Endothelial cell of umbilical vein (primary cell): ENCODE measurements at regions of chr22 and their contacts with region 1.

Region 1: GRCh38 chr22:22877523-22878210 is 9.9 kb upstream of the IGLL5 start:
- DNase-seq: peak; percentile 40
- H3K4me3 ChIP-seq: no peak overlapping the region
- H3K27ac ChIP-seq: no peak overlapping the region
- H3K4me1 ChIP-seq: no peaks in the 10 kb centered on the region
- H3K27me3 ChIP-seq: no peaks in the 10 kb centered on the region
- CTCF ChIP-seq: peak; percentile 65 to 85
- POLR2A ChIP-seq: no peak

Region 2: DNA sequence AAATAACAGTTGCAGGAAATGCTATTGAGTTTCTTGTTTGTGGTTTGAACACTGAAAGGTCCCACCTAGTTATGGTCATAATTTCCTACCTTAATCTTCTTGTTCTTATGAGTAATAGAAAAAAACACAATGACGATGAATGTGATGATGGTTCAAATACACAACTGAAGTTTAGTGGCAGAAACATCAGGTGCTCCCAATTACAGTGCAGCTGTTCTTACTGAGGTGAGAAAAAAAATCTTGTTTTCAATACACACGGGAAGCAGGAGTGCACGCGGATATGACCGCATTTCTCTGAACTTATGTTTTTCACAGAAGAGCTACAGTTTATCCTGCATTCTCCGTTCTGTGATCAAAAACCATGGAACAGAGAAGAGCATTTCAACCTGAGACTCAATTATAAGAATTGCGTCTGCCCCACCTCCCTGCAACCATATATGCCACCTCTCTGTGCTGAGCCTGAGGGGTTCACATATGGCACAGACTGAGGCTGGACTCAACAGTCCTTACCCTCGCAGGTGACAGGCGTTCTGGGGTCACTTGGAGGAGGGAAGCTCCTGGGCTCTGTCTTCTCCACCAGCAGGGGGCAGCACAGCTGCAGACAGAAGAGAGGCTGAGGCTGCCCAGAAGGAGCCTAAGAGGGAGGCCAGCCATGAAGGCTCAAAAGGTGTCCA is 89.7 kb before region 1 on chr22:
- CTCF ChIA-PET with region 1: interaction called, 75 read pairs
- POLR2A ChIA-PET with region 1: no interaction called
- dilution Hi-C with region 1: no loop called
- intact Hi-C with region 1: no loop called
- DNase-seq: peak; percentile 34
- H3K4me3 ChIP-seq: no peak overlapping the region
- H3K27ac ChIP-seq: no peak overlapping the region
- H3K4me1 ChIP-seq: no peaks in the 10 kb centered on the region
- H3K27me3 ChIP-seq: peaks cover 0 to 5% of the 10 kb centered on the region in 2 experiments
- CTCF ChIP-seq: peak; percentile 80 to 91
- POLR2A ChIP-seq: no peak

Region 3: GRCh38 chr22:22810018-22810427 is 67.6 kb before region 1 on chr22:
- CTCF ChIA-PET with region 1: interaction called, 37 read pairs
- POLR2A ChIA-PET with region 1: no interaction called
- dilution Hi-C with region 1: no loop called
- intact Hi-C with region 1: no loop called
- DNase-seq: peak; percentile 7
- H3K4me3 ChIP-seq: no peak overlapping the region
- H3K27ac ChIP-seq: no peak overlapping the region
- H3K4me1 ChIP-seq: no peaks in the 10 kb centered on the region
- H3K27me3 ChIP-seq: peaks cover 8 to 16% of the 10 kb centered on the region in 2 experiments
- CTCF ChIP-seq: peak; percentile 80 to 82
- POLR2A ChIP-seq: no peak

Region 4: GRCh38 chr22:22855617-22856308 is 21.9 kb before region 1 on chr22:
- CTCF ChIA-PET with region 1: interaction called, 27 read pairs
- POLR2A ChIA-PET with region 1: no interaction called
- dilution Hi-C with region 1: no loop called
- intact Hi-C with region 1: no loop called
- DNase-seq: no peak
- H3K4me3 ChIP-seq: no peak overlapping the region
- H3K27ac ChIP-seq: no peak overlapping the region
- H3K4me1 ChIP-seq: no peaks in the 10 kb centered on the region
- H3K27me3 ChIP-seq: peaks cover 0 to 5% of the 10 kb centered on the region in 2 experiments
- CTCF ChIP-seq: peak; percentile 28 to 56
- POLR2A ChIP-seq: no peak